GM12878 (cell line): ENCODE measurements at regions of chr14 and their contacts with region 1.

Region 1: GRCh38 chr14:49633640-49634546 is 1.2 kb downstream of the DNAAF2 start:
- DNase-seq: peak; percentile 78
- ATAC-seq: peak; percentile 82
- H3K4me3 ChIP-seq: peak overlapping the region; percentile 99
- H3K27ac ChIP-seq: peak overlapping the region; percentile 85
- H3K4me1 ChIP-seq: peaks cover 6% of the 10 kb centered on the region; the same call in 1 of the 2 replicates
- H3K27me3 ChIP-seq: no peaks in the 10 kb centered on the region
- CTCF ChIP-seq: peak; percentile 80 to 99 (median 87); a peak in 5 of 6 replicates
- EP300 ChIP-seq: peak in 1 of 2 experiments; percentile 35; a peak in 1 of 4 replicates
- POLR2A ChIP-seq: peak; percentile 83
- RAD21 ChIP-seq: peak; percentile 88

Region 2: DNA sequence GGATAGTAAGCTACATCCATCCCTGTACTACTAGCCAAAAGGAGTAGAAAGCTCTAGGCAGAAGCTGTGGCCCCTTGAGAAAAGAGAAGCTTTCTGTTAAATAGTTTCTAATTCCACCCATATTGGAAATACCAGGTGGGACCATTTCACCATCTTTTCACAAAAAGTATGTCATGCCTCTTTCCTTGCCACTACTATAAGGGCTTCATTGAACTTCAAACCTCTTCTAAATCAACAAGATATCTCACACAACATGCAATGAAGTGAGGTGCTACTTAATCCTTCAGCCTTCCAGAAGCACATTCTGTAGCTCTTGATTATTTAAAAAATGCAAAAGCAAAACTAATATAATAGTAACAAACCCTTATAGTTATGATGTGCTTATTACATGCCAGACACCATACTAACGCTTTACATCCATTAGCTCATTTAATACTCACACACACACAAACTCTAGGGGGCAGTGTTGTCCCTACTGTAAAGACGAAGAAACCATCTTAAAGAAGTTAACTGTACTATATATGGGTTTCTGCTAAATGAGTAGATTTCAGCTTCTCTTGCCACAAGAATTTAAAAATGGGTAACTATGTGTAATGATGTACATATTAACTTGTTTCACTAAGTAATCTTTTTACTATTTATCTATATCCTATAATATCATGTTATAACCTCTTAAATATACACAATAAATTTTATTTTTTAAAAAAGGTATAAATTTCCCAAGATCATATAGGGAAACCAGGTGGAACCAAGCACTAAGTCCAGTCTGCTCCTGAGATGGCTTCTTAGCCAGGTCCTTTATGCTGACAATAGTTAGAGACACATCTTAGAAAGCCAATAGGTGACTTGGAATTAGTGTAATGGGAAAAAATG is 172.1 kb before region 1 on chr14:
- CTCF ChIA-PET with region 1: interaction called, 9 read pairs
- POLR2A ChIA-PET with region 1: no interaction called
- RAD21 ChIA-PET with region 1: interaction called, 14 read pairs
- SMC1A ChIA-PET with region 1: interaction called, 7 read pairs
- in situ Hi-C with region 1: no loop called
- intact Hi-C with region 1: no loop called
- DNase-seq: peak; percentile 43
- ATAC-seq: peak; percentile 98
- H3K4me3 ChIP-seq: no peak overlapping the region
- H3K27ac ChIP-seq: no peak overlapping the region
- H3K4me1 ChIP-seq: no peaks in the 10 kb centered on the region
- H3K27me3 ChIP-seq: no peaks in the 10 kb centered on the region
- CTCF ChIP-seq: peak; percentile 64 to 80 (median 66)
- EP300 ChIP-seq: no peak
- POLR2A ChIP-seq: no peak
- RAD21 ChIP-seq: peak; percentile 84

Region 3: GRCh38 chr14:49598485-49599300 is 35.2 kb before region 1 on chr14 and contains the start of gene LRR1:
- CTCF ChIA-PET with region 1: interaction called, 3 read pairs
- POLR2A ChIA-PET with region 1: interaction called, 12 read pairs
- RAD21 ChIA-PET with region 1: interaction called, 13 read pairs
- SMC1A ChIA-PET with region 1: interaction called, 12 read pairs
- in situ Hi-C with region 1: no loop called
- intact Hi-C with region 1: loop called (anchors 2 kb)
- DNase-seq: peak; percentile 60
- ATAC-seq: peak; percentile 66
- H3K4me3 ChIP-seq: peak within 1 kb of the TSS; percentile 92
- H3K27ac ChIP-seq: peak within 1 kb of the TSS; percentile 100
- H3K4me1 ChIP-seq: peaks cover 17% of the 10 kb centered on the region
- H3K27me3 ChIP-seq: no peaks in the 10 kb centered on the region
- CTCF ChIP-seq: no peak
- EP300 ChIP-seq: peak in 1 of 2 experiments; percentile 6; a peak in 1 of 4 replicates
- POLR2A ChIP-seq: peak; percentile 93
- RAD21 ChIP-seq: no peak
- polyA plus RNA-seq, gene LRR1: 63.9 to 110 TPM

Region 4: DNA sequence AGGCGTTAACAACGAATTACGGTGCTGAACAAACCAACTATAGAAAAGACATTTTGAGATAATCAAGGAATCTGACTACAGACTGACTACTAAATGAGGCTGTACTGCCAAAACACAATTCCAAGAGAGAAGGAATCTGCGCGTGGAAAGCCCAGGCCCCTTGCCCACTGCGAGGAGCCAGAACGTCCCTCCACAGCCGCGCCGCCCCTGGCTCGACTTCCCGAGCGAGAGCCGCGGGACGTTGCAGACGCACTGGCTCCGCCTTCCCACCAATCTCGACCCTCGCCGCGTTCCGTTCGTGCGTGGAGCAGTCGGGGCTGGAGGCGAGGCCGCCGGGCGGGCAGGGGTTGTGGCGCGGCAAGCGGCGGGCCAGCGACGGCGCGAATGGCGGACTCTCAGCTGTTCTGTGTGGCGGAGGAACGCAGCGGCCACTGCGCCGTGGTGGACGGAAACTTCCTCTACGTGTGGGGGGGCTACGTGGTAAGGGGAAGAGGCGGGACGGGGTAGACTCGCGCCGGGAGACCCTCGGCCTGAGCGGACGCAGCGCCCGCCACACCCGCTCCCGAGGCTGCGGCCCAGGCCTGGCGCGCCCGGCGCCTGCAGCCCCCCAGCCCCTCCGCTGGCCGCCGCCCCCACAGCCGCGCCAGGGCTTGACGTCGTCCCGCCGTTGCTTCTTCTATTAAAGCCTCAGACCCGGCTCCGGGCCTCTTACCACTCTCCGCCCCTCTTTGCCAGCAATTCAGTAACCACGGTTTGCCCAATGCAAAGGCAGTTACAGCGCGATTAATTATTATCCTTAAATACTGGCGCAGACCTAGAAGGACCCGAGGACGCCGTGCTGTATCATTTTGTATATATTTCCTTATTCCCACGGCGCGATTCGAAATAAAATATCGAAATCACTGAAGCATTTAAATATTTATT is 59.2 kb after region 1 on chr14 and contains the start of gene KLHDC1:
- CTCF ChIA-PET with region 1: interaction called, 3 read pairs
- POLR2A ChIA-PET with region 1: interaction called, 3 read pairs
- RAD21 ChIA-PET with region 1: interaction called, 4 read pairs
- SMC1A ChIA-PET with region 1: interaction called, 5 read pairs
- in situ Hi-C with region 1: no loop called
- intact Hi-C with region 1: loop called (anchors 2 kb)
- DNase-seq: no peak
- ATAC-seq: peak; percentile 76
- H3K4me3 ChIP-seq: peak within 1 kb of the TSS; percentile 62
- H3K27ac ChIP-seq: peak within 1 kb of the TSS; percentile 33; the same call in 1 of the 2 replicates
- H3K4me1 ChIP-seq: peaks cover 4% of the 10 kb centered on the region
- H3K27me3 ChIP-seq: no peaks in the 10 kb centered on the region
- CTCF ChIP-seq: no peak
- EP300 ChIP-seq: no peak
- POLR2A ChIP-seq: peak; percentile 96
- RAD21 ChIP-seq: no peak
- polyA plus RNA-seq, gene KLHDC1: 0.22 to 0.35 TPM

Region 5: GRCh38 chr14:49828640-49829039 is 194.7 kb after region 1 on chr14:
- CTCF ChIA-PET with region 1: interaction called, 15 read pairs
- POLR2A ChIA-PET with region 1: interaction called, 13 read pairs
- RAD21 ChIA-PET with region 1: interaction called, 6 read pairs
- SMC1A ChIA-PET with region 1: interaction called, 5 read pairs
- in situ Hi-C with region 1: no loop called
- intact Hi-C with region 1: loop called (anchors 1 kb)
- DNase-seq: no peak
- ATAC-seq: no peak
- H3K4me3 ChIP-seq: no peak overlapping the region
- H3K27ac ChIP-seq: no peak overlapping the region
- H3K4me1 ChIP-seq: no peaks in the 10 kb centered on the region
- H3K27me3 ChIP-seq: no peaks in the 10 kb centered on the region
- CTCF ChIP-seq: no peak
- EP300 ChIP-seq: no peak
- POLR2A ChIP-seq: no peak
- RAD21 ChIP-seq: no peak

Region 6: GRCh38 chr14:50099335-50099734 is 465.4 kb after region 1 on chr14:
- CTCF ChIA-PET with region 1: interaction called, 4 read pairs
- POLR2A ChIA-PET with region 1: interaction called, 3 read pairs
- RAD21 ChIA-PET with region 1: interaction called, 13 read pairs
- SMC1A ChIA-PET with region 1: interaction called, 4 read pairs
- in situ Hi-C with region 1: no loop called
- intact Hi-C with region 1: no loop called
- DNase-seq: no peak
- ATAC-seq: no peak
- H3K4me3 ChIP-seq: no peak overlapping the region
- H3K27ac ChIP-seq: no peak overlapping the region
- H3K4me1 ChIP-seq: peaks cover 12% of the 10 kb centered on the region
- H3K27me3 ChIP-seq: no peaks in the 10 kb centered on the region
- CTCF ChIP-seq: no peak
- EP300 ChIP-seq: no peak
- POLR2A ChIP-seq: no peak
- RAD21 ChIP-seq: no peak

Region 7: GRCh38 chr14:50532502-50533240 is 898.8 kb after region 1 on chr14 and contains the start of gene MAP4K5:
- CTCF ChIA-PET with region 1: interaction called, 3 read pairs
- POLR2A ChIA-PET with region 1: no interaction called
- RAD21 ChIA-PET with region 1: interaction called, 3 read pairs
- SMC1A ChIA-PET with region 1: no interaction called
- in situ Hi-C with region 1: no loop called
- intact Hi-C with region 1: loop called (anchors 5 kb)
- DNase-seq: peak; percentile 40
- ATAC-seq: peak; percentile 91
- H3K4me3 ChIP-seq: peak within 1 kb of the TSS; percentile 81
- H3K27ac ChIP-seq: peak within 1 kb of the TSS; percentile 75
- H3K4me1 ChIP-seq: peaks cover 10% of the 10 kb centered on the region
- H3K27me3 ChIP-seq: no peaks in the 10 kb centered on the region
- CTCF ChIP-seq: peak; percentile 89 to 99 (median 92); a peak in 5 of 6 replicates
- EP300 ChIP-seq: 0 out of 4 replicates have a peak, but pooled peaks of 1 of the 2 experiments have one; percentile 16
- POLR2A ChIP-seq: no peak; the same call in 1 of the 2 replicates
- RAD21 ChIP-seq: peak; percentile 96
- polyA plus RNA-seq, gene MAP4K5: 9.1 to 12.0 TPM